Panc1 (cell line): ENCODE measurements at regions of chr2 and their contacts with region 1.

Region 1: GRCh38 chr2:203814661-203815540 is 52.7 kb upstream of the CTLA4 start:
- DNase-seq: peak; percentile 47
- ATAC-seq: peak; percentile 93
- H3K4me3 ChIP-seq: no peak overlapping the region
- H3K27ac ChIP-seq: no peak overlapping the region
- H3K4me1 ChIP-seq: 0 out of 2 replicates have a peak, but pooled peaks cover 2% of the 10 kb centered on the region
- H3K27me3 ChIP-seq: peaks cover 11% of the 10 kb centered on the region
- CTCF ChIP-seq: peak; percentile 79

Region 2: DNA sequence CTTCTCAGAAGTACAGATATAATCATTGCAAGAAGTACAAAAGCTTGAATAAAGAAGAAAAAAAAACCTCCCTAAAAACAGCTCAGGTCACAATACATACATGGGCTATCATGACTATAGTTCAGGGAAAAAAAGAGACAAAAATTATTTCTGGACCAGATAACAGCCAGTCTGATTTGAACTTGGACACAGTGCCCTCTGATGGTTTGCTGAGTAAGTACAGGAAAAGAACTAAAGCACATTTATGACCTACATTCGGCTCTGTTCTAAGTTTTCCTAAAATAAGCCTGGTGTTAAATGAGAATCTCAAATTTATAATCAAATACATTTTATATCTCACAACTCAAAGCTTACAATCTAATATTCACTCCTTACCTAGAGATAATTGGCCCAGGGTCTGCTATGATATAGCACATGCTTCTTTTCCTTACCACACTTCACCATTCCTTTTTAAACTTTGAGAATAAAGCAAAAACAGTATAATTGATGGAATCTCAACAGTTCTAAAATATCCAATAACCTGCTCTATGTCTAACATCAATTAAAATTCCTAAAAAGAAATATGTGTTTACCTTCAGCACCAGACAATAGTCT is 360.9 kb before region 1 on chr2:
- CTCF ChIA-PET with region 1: interaction called, 3 read pairs
- POLR2A ChIA-PET with region 1: no interaction called
- in situ Hi-C with region 1: no loop called
- intact Hi-C with region 1: loop called (anchors 10 kb)
- DNase-seq: peak; percentile 42
- ATAC-seq: peak; percentile 81
- H3K4me3 ChIP-seq: no peak overlapping the region
- H3K27ac ChIP-seq: no peak overlapping the region
- H3K4me1 ChIP-seq: no peaks in the 10 kb centered on the region
- H3K27me3 ChIP-seq: no peaks in the 10 kb centered on the region
- CTCF ChIP-seq: peak; percentile 78; the same call in 1 of the 2 replicates

Region 3: GRCh38 chr2:203484266-203485112 is 330.4 kb before region 1 on chr2:
- CTCF ChIA-PET with region 1: no interaction called
- POLR2A ChIA-PET with region 1: no interaction called
- in situ Hi-C with region 1: no loop called
- intact Hi-C with region 1: loop called (anchors 1 kb)
- DNase-seq: peak; percentile 45
- ATAC-seq: peak; percentile 88
- H3K4me3 ChIP-seq: no peak overlapping the region
- H3K27ac ChIP-seq: no peak overlapping the region
- H3K4me1 ChIP-seq: no peaks in the 10 kb centered on the region
- H3K27me3 ChIP-seq: no peaks in the 10 kb centered on the region
- CTCF ChIP-seq: peak; percentile 81

Region 4: GRCh38 chr2:203650860-203651613 is 163.9 kb before region 1 on chr2:
- CTCF ChIA-PET with region 1: no interaction called
- POLR2A ChIA-PET with region 1: no interaction called
- in situ Hi-C with region 1: no loop called
- intact Hi-C with region 1: loop called (anchors 10 kb)
- DNase-seq: peak; percentile 57
- ATAC-seq: peak; percentile 95
- H3K4me3 ChIP-seq: no peak overlapping the region
- H3K27ac ChIP-seq: no peak overlapping the region
- H3K4me1 ChIP-seq: peaks cover 14% of the 10 kb centered on the region; the same call in 1 of the 2 replicates
- H3K27me3 ChIP-seq: no peaks in the 10 kb centered on the region
- CTCF ChIP-seq: no peak; the same call in 1 of the 2 replicates

Region 5: GRCh38 chr2:203949228-203949627 is 134.3 kb after region 1 on chr2:
- CTCF ChIA-PET with region 1: no interaction called
- POLR2A ChIA-PET with region 1: no interaction called
- in situ Hi-C with region 1: no loop called
- intact Hi-C with region 1: no loop called
- DNase-seq: no peak
- ATAC-seq: no peak
- H3K4me3 ChIP-seq: no peak overlapping the region
- H3K27ac ChIP-seq: no peak overlapping the region
- H3K4me1 ChIP-seq: no peaks in the 10 kb centered on the region
- H3K27me3 ChIP-seq: no peaks in the 10 kb centered on the region; the same call in 1 of the 2 replicates
- CTCF ChIP-seq: no peak

Region 6: DNA sequence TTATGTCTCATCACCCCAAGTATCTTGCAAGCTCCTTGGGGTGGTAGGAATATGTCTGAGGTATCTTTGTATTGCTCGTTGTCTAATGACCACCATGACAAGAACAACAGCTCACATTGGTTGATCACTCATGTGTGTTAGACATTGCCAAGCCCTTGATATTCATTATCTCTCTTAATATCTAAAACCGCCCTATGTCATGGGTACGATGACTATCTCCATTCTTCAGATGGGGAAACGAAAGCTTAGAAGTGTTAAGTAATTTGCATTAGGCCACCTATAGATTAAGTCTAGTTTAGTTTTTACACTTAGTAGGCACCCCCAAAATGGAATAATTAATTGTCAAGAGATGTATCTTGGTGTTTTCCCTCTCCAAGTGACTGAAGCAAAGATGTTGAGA is 178.7 kb after region 1 on chr2:
- CTCF ChIA-PET with region 1: no interaction called
- POLR2A ChIA-PET with region 1: no interaction called
- in situ Hi-C with region 1: no loop called
- intact Hi-C with region 1: no loop called
- DNase-seq: no peak
- ATAC-seq: no peak
- H3K4me3 ChIP-seq: no peak overlapping the region
- H3K27ac ChIP-seq: no peak overlapping the region
- H3K4me1 ChIP-seq: no peaks in the 10 kb centered on the region
- H3K27me3 ChIP-seq: peaks cover 2% of the 10 kb centered on the region
- CTCF ChIP-seq: no peak